ENCODE measurements at regions of chr9 and their contacts with region 1.

Region 1: GRCh38 chr9:34310205-34310604 is 18.9 kb downstream of the KIF24 start:
- DNase-seq: no peak
- H3K4me3 ChIP-seq: no peak overlapping the region
- H3K27ac ChIP-seq: no peak overlapping the region
- H3K4me1 ChIP-seq: no peaks in the 10 kb centered on the region
- CTCF ChIP-seq: no peak

Region 2: DNA sequence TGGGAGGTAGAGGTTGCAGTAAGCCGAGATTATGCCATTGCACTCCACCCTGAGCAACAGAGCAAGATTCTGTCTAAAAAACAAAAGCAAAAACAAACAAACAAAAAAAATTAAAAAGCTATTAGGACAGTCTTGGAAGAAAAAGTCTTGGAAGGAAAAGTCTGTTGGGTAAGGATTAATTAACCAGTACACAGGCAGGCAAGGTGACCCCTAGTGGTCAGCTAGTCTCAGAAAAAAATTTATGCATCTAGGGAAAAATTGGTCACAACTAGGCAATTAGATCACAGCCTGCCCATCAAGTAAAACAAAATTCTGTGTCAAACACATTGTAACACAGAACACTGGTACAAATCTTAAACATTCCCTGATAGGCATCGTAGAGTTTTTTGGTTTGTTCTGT is 792.8 kb before region 1 on chr9:
- CTCF ChIA-PET with region 1: no interaction called
- POLR2A ChIA-PET with region 1: no interaction called
- intact Hi-C with region 1: no loop called
- DNase-seq: peak; percentile 33
- H3K4me3 ChIP-seq: no peak overlapping the region
- H3K27ac ChIP-seq: no peak overlapping the region
- H3K4me1 ChIP-seq: no peaks in the 10 kb centered on the region
- CTCF ChIP-seq: peak; percentile 82

Region 3: GRCh38 chr9:33972698-33973097 is 337.5 kb before region 1 on chr9:
- CTCF ChIA-PET with region 1: no interaction called
- POLR2A ChIA-PET with region 1: no interaction called
- intact Hi-C with region 1: no loop called
- DNase-seq: no peak
- H3K4me3 ChIP-seq: no peak overlapping the region
- H3K27ac ChIP-seq: no peak overlapping the region
- H3K4me1 ChIP-seq: no peaks in the 10 kb centered on the region
- CTCF ChIP-seq: no peak

Region 4: DNA sequence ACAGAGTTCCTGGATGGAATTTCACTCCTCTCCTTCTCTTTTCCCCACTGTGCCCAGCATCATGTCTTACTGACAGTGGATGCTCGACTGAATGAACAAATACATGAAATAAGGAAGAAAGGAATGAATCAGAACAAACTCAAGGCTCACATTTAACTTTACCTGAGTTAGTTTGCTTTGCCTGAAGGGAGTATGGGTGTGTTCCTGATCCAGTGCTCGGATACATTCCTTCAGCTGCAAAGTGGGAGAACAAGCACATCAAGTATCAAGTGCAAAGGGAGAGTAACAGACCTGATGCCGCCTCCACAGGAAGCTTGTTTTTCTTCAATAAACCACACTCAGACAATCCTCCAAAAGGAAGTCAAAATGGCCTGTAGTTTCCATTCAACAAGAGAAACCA is 47.3 kb before region 1 on chr9:
- CTCF ChIA-PET with region 1: no interaction called
- POLR2A ChIA-PET with region 1: interaction called, 3 read pairs
- intact Hi-C with region 1: loop called (anchors 5 kb)
- DNase-seq: no peak
- H3K4me3 ChIP-seq: no peak overlapping the region
- H3K27ac ChIP-seq: no peak overlapping the region
- H3K4me1 ChIP-seq: peaks cover 3% of the 10 kb centered on the region
- CTCF ChIP-seq: no peak

Region 5: DNA sequence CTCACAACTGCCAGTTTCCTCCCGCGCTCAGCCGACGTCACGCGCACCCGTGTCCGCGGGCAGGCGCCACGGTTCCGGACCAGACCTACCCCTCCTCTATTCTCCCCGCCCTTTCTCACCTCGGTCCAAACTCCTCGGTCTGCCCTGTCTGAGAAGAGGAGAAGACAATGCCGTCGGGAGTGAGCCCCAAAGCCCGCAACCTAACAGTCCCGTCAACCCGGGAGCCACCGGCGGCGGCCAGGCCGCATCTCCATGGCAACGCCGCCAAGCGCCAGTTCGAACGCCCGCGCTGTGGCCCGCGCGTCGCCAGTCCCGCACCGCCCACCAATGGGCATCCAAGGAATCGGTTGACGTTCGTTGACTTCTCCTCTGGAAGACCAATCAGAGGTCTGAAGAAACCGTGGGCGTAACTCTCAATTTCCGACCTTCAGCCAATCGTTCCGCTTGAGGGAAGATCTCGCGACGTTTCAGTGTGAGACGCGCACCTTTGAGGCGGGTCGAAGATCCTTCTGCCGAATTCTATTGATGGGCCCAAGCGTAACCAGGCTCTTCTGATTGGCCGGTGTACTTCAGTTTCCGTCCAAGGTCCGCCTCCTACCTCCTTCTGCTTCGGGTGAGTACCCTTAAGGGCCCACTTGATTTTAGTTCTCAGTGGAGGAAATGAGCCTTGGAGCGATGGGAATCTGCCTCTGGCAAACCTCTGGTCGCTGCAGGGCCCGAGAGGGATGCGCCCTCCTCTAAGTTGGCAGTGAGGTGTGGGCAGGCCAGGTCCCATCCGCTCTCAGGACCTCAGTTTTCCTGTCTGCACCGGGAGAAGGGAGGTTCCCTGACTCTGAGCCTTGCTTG is 19.0 kb after region 1 on chr9 and contains the starts of genes KIF24 and NUDT2:
- CTCF ChIA-PET with region 1: no interaction called
- POLR2A ChIA-PET with region 1: no interaction called
- intact Hi-C with region 1: no loop called
- DNase-seq: peak; percentile 100
- H3K4me3 ChIP-seq: peak within 1 kb of the TSS; percentile 98
- H3K27ac ChIP-seq: peak within 1 kb of the TSS; percentile 74
- H3K4me1 ChIP-seq: peaks cover 46% of the 10 kb centered on the region
- CTCF ChIP-seq: no peak
- total RNA-seq, gene KIF24: 16.3 and 19.4 TPM in 2 replicates
- total RNA-seq, gene NUDT2: 23.8 and 27.7 TPM in 2 replicates

Measured in OCI-LY7 (cell line).